ENCODE measurements at regions of chr6 and their contacts with region 1.

Region 1: GRCh38 chr6:122033539-122034181 is 365.8 kb upstream of the HSF2 start:
- DNase-seq: peak in 6 of 9 donors; percentile 12 to 60 (median 53)
- ATAC-seq: peak; percentile 84
- H3K4me3 ChIP-seq: no peak overlapping the region
- H3K4me3 Mint-ChIP-seq: no peak overlapping the region
- H3K27ac ChIP-seq: no peak overlapping the region
- H3K27ac Mint-ChIP-seq: no peak overlapping the region
- H3K4me1 ChIP-seq: no peaks in the 10 kb centered on the region
- H3K4me1 Mint-ChIP-seq: peaks cover 0 to 12% (median 0%) of the 10 kb centered on the region in 7 donors
- H3K27me3 ChIP-seq: no peaks in the 10 kb centered on the region
- H3K27me3 Mint-ChIP-seq: peaks cover 0 to 5% (median 0%) of the 10 kb centered on the region in 5 donors

Region 2: DNA sequence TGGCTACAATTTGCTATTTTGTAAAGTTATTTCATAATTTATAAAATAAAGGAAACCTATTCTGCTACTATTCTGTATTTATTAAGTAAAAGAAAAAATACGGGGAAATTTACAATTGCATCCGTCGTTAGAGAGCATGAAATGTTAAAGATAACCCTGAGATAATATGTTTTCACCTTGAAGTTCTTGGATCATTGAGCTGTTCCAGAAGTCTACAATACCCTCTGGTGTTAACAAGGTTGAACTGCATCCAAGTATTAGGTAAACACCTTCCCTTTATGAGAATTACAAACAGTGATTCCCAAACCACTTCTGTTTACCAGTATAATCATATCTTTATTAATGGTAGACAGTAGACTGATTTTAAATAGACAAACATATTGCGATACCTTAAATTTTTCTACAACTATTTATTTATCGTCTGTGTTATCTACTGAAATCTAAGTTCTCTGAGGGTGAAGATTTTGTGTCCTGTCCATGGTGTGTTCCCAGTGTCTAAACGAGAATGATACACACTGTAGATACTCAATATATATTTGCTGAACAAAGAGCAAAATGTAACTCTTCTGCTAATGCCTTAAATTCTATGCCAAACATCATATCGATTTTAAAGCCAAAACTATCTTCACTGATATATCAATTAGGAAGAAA is 727.6 kb before region 1 on chr6:
- CTCF ChIA-PET with region 1: no interaction called
- POLR2A ChIA-PET with region 1: no interaction called
- intact Hi-C with region 1: loop called in 1 of 2 experiments (anchors 2 kb)
- DNase-seq: peak in 5 of 9 donors; percentile 2 to 14 (median 6)
- ATAC-seq: peak; percentile 62
- H3K4me3 ChIP-seq: no peak overlapping the region
- H3K4me3 Mint-ChIP-seq: no peak overlapping the region
- H3K27ac ChIP-seq: no peak overlapping the region
- H3K27ac Mint-ChIP-seq: peak overlapping the region in 1 of 9 donors; percentile 54
- H3K4me1 ChIP-seq: no peaks in the 10 kb centered on the region
- H3K4me1 Mint-ChIP-seq: peaks cover 0 to 7% (median 0%) of the 10 kb centered on the region in 7 donors
- H3K27me3 ChIP-seq: no peaks in the 10 kb centered on the region
- H3K27me3 Mint-ChIP-seq: no peaks in the 10 kb centered on the region

Region 3: GRCh38 chr6:121354764-121355163 is 678.9 kb before region 1 on chr6:
- CTCF ChIA-PET with region 1: no interaction called
- POLR2A ChIA-PET with region 1: no interaction called
- intact Hi-C with region 1: loop called in 1 of 2 experiments (anchors 1 kb)
- DNase-seq: no peak
- ATAC-seq: no peak
- H3K4me3 ChIP-seq: no peak overlapping the region
- H3K4me3 Mint-ChIP-seq: no peak overlapping the region
- H3K27ac ChIP-seq: no peak overlapping the region
- H3K27ac Mint-ChIP-seq: no peak overlapping the region
- H3K4me1 ChIP-seq: no peaks in the 10 kb centered on the region
- H3K4me1 Mint-ChIP-seq: no peaks in the 10 kb centered on the region
- H3K27me3 ChIP-seq: no peaks in the 10 kb centered on the region
- H3K27me3 Mint-ChIP-seq: peaks cover 23 to 46% (median 31%) of the 10 kb centered on the region in 5 donors

Region 4: DNA sequence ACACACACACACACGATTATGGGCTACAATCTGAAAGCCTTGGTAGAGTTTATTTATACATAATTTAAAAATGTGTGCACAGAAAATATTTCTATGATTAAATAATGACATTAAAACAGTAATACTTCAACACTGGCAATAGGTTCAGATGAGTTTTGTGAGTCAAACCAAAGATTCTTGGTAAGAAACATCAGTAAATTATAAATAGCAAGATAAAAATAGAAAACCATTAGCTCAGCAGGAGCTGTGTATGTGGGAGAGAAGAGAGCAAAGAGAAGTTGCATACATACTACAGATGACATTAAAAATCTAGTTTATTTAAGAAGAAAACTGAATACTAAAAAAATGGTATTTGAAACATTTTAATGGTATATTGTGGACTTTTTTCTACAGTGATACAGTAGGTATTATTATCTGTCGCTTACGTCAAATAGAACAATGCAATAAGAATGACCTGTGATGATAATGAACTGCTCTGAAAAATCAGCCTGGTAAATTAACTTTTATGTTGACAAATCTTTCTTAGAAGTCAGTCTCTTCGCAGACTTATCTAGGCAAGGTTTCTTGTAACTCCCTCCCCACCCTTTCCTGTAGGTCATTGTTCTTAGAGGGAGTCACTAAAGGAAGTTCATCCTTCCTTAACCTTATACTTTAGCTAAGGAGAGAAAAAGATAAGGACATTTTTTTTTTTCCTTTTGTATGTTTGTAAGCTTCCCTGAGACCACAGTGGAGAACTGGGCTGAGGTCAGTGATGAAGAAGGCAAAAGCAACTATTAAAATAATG is 448.9 kb before region 1 on chr6:
- CTCF ChIA-PET with region 1: no interaction called
- POLR2A ChIA-PET with region 1: no interaction called
- intact Hi-C with region 1: loop called in 1 of 2 experiments (anchors 1 kb)
- DNase-seq: no peak
- ATAC-seq: no peak
- H3K4me3 ChIP-seq: no peak overlapping the region
- H3K4me3 Mint-ChIP-seq: peak overlapping the region in 1 of 10 donors; percentile 30
- H3K27ac ChIP-seq: no peak overlapping the region
- H3K27ac Mint-ChIP-seq: no peak overlapping the region
- H3K4me1 ChIP-seq: no peaks in the 10 kb centered on the region
- H3K4me1 Mint-ChIP-seq: peaks cover 4 to 18% (median 11%) of the 10 kb centered on the region in 7 donors
- H3K27me3 ChIP-seq: no peaks in the 10 kb centered on the region
- H3K27me3 Mint-ChIP-seq: no peaks in the 10 kb centered on the region

Region 5: DNA sequence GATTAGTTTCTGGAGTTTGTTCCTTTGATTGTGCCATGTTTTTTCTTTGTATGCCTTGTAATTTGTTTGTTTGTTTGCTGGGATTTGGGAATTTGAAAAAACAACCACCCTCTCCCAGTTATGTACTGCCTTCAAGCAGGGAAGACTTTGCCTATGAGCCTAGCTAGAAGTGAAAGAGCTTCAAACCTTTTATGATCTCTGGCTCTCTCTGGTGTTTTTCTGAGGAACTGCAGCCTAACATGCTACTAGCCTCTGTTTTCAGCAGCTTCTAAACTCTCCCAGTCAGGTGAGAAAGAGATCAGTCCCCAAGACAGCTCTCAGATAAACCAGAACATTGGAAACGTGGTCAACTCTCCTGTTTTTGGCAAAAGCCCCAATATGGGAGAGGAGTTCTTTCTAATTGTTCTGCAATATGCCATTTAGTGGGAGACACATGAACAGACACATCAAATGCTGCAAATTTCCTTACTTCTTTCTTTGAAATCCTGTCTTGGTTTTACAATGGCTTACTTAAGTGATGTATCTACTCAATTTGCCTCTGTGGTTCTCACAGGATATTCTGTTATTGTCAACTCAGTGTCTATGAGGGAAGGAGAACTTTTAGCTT is 496.9 kb after region 1 on chr6:
- CTCF ChIA-PET with region 1: no interaction called
- POLR2A ChIA-PET with region 1: no interaction called
- intact Hi-C with region 1: loop called in 1 of 2 experiments (anchors 2 kb)
- DNase-seq: peak in 8 of 9 donors; percentile 36 to 73 (median 64)
- ATAC-seq: peak; percentile 86
- H3K4me3 ChIP-seq: no peak overlapping the region
- H3K4me3 Mint-ChIP-seq: no peak overlapping the region
- H3K27ac ChIP-seq: no peak overlapping the region
- H3K27ac Mint-ChIP-seq: no peak overlapping the region
- H3K4me1 ChIP-seq: no peaks in the 10 kb centered on the region
- H3K4me1 Mint-ChIP-seq: peaks cover 0 to 8% (median 0%) of the 10 kb centered on the region in 7 donors
- H3K27me3 ChIP-seq: no peaks in the 10 kb centered on the region
- H3K27me3 Mint-ChIP-seq: peaks cover 34 to 48% (median 37%) of the 10 kb centered on the region in 5 donors

Measured in naive thymus-derived CD4-positive, alpha-beta T cell (primary cell).